ENCODE measurements at regions of chr20 and their contacts with region 1.

Region 1: DNA sequence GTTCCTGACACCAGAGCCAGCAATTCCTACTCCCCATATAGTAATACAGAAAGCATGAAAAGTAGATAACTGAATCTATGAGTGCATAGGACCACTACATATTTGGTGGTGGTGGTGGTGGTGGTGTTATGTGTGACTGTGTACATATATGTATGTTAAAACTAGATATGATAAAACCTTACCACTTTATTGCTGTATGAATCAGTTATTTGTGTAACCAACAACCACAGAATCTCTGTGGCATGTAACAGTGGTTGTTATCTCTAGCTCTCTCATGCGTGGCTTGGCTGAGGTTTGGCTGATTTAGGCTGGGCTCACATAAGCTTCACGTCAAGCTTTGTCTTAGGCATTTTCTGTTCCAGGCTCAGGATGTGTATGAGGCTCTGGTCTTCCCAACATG is 55.7 kb downstream of the PLCB1 start:
- DNase-seq: no peak
- H3K4me3 ChIP-seq: no peak overlapping the region
- H3K27ac ChIP-seq: no peak overlapping the region
- H3K4me1 ChIP-seq: no peaks in the 10 kb centered on the region
- H3K27me3 ChIP-seq: no peaks in the 10 kb centered on the region
- CTCF ChIP-seq: no peak

Region 2: GRCh38 chr20:8153281-8153908 is 34.3 kb before region 1 on chr20:
- CTCF ChIA-PET with region 1: no interaction called
- dilution Hi-C with region 1: loop called (anchors 5 kb)
- in situ Hi-C with region 1: no loop called
- intact Hi-C with region 1: no loop called
- DNase-seq: no peak
- H3K4me3 ChIP-seq: no peak overlapping the region
- H3K27ac ChIP-seq: no peak overlapping the region
- H3K4me1 ChIP-seq: no peaks in the 10 kb centered on the region
- H3K27me3 ChIP-seq: no peaks in the 10 kb centered on the region
- CTCF ChIP-seq: no peak

Region 3: DNA sequence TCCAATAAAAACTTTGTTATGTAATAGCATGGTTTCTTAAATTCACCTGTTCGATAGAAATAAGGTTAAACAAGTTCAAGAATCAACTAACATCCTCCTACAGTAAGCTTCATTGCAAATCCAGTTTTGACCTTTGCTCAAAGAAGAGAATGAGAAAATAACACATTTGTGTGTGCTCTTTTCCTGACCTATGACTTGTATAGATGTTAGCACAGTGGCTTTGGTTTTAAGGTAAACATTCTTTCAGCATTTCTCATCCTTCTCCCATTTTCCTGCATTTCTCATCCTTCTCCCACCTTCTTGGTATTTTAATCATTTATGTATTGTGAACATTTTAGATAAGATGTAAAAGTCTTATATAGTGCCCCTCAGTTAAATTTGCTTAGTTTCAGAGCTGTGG is 18.3 kb after region 1 on chr20:
- CTCF ChIA-PET with region 1: no interaction called
- dilution Hi-C with region 1: no loop called
- in situ Hi-C with region 1: no loop called
- intact Hi-C with region 1: no loop called
- DNase-seq: no peak
- H3K4me3 ChIP-seq: no peak overlapping the region
- H3K27ac ChIP-seq: no peak overlapping the region
- H3K4me1 ChIP-seq: no peaks in the 10 kb centered on the region
- H3K27me3 ChIP-seq: no peaks in the 10 kb centered on the region
- CTCF ChIP-seq: no peak